ENCODE measurements at regions of chr9 and their contacts with region 1.

Region 1: DNA sequence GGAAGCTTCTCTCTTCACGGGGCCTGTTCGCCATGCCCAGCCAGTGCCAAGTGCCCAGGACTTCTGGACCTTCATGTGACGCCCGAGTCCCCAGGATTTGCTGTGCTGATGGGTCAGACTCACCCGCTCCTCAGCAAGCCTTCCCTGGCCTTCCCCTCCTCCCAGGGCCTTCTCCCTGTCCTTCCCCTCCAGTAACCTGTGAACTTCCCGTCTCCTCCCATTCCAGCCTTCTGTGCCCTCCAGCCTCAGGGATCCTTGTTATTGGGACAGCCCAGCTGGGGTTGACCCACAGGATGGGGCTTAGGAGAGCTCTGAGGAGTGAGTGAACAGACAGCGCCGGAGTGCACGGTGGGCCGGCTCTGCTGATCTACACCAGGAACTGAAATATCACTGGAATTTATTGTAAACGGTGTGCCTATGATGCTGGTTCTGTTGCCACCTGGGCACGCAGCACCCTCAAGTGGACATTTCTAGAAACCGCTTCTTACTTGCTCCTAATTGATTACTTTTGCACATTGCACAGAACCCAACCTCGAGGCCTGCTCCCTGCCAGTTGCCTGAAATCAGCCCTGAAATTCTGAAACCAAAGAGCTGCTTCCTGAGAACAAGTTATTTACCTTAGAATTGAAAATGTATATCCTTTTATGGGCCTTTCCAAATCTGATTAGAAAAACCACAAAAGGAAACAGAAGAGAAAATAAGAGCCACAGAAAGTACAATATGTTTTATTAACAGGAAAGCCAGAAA is 1.5 kb downstream of the SPAAR start:
- DNase-seq: peak; percentile 28
- H3K4me3 Mint-ChIP-seq: peak overlapping the region; percentile 57
- H3K27ac Mint-ChIP-seq: peak overlapping the region; percentile 69
- H3K4me1 Mint-ChIP-seq: peaks cover 32% of the 10 kb centered on the region
- H3K27me3 Mint-ChIP-seq: peaks cover 2% of the 10 kb centered on the region

Region 2: GRCh38 chr9:35932735-35933134 is 21.9 kb after region 1 on chr9:
- intact Hi-C with region 1: loop called (anchors 1 kb)
- DNase-seq: no peak
- H3K4me3 Mint-ChIP-seq: no peak overlapping the region
- H3K27ac Mint-ChIP-seq: no peak overlapping the region
- H3K4me1 Mint-ChIP-seq: peaks cover 16% of the 10 kb centered on the region
- H3K27me3 Mint-ChIP-seq: peaks cover 7% of the 10 kb centered on the region